Common myeloid progenitor, CD34-positive (primary cell): ENCODE measurements at regions of chr10 and their contacts with region 1.

Region 1: DNA sequence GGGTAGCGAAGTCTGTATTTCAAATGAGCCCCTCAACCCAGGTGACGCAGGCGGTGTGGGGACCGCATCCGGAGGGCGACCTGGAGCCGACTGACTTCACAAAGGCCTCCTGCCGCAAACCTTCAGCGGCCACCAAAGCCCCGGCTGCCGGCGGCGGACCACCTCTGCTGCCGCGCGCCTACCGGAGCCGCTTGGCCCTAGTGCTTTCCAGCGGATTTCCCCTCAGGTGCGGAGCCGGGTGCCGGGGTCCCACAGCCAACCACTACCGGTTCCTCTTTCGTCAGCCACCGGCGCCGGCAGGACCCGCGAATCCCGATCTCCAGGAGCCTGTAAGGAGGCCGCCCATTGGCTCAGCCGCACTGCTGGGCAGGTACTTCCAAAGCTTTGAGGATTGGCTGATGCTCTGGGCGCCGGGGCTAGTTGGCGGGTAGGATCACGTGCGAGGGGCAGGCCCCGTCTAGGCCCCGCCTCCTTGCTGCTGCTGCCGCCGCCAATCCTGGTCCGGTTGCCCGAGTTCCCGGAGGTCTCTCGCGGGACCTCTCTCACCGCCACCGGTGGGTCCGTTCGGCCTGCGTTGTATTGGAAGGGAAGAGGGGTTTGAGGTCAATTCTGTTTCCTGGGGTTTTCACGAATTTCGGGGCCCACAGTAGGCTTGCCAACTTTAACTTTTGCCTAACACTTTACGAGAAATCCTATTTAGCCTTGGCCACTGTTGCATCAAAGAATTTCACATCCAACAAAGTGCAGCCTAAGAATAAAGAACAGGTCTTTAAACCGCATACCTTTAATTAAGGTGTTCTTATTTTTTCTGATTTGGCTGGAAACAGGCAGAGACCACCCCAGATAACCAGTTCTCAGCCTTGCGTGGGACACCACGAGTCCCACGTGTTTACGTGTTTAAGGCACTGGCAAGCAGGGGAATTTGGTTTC is at the start of gene GSTO2:
- DNase-seq: peak; percentile 99 to 100 (median 99)
- H3K4me3 ChIP-seq: peak within 1 kb of the TSS; percentile 74 to 95 (median 83)
- H3K27ac ChIP-seq: peak within 1 kb of the TSS; percentile 92 to 94
- H3K4me1 ChIP-seq: peaks cover 13 to 20% (median 16%) of the 10 kb centered on the region in 4 experiments
- H3K27me3 ChIP-seq: no peaks in the 10 kb centered on the region

Region 2: DNA sequence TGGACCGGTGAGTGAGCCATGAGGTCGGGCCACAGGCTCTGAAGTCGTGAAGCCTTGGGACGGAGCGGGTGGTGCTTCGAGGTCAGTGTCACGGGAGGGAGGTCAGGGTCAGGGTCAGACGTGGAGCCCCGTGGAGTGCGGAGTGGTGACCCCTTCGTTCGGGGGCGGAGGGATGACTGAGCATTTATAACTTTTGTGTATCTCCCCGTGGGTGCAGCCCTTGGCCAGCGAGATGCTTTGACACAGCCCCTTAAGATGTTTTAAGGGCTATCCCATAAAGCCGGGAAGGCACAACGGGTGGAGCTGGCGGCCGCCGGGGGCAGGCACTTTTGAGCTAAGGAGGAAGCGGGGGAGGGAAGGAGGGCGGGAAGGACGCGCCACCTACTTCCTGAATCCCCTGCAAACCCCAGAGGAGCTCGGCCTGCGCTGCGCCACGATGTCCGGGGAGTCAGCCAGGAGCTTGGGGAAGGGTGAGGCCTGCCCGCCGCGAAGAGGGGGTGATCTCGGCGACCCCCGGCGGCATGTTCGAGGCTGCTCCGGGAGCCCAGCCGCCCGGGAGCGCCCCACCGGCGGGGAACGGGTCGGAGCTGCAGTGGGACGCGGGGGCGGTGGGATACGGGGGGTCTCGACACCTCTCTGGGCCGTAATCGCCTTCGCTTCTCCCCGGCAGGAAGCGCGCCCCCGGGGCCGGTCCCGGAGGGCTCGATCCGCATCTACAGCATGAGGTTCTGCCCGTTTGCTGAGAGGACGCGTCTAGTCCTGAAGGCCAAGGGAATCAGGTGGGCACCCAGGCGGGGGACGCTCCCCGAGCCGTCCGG is 14.3 kb before region 1 on chr10 and contains the start of gene GSTO1:
- CTCF ChIA-PET with region 1: interaction called, 37 read pairs
- POLR2A ChIA-PET with region 1: interaction called, 13 read pairs
- DNase-seq: peak; percentile 48 to 64 (median 64)
- H3K4me3 ChIP-seq: peak within 1 kb of the TSS; percentile 78 to 93 (median 91)
- H3K27ac ChIP-seq: peak within 1 kb of the TSS; percentile 69 to 86
- H3K4me1 ChIP-seq: peaks cover 12 to 52% (median 27%) of the 10 kb centered on the region in 4 experiments
- H3K27me3 ChIP-seq: no peaks in the 10 kb centered on the region